ENCODE measurements at regions of chr5 and their contacts with region 1.

Region 1: GRCh38 chr5:136517755-136518154 is 152.4 kb upstream of the TRPC7 start:
- DNase-seq: no peak
- ATAC-seq: no peak
- H3K4me3 ChIP-seq: no peak overlapping the region
- H3K27ac ChIP-seq: no peak overlapping the region
- H3K4me1 ChIP-seq: no peaks in the 10 kb centered on the region; the same call in 1 of the 2 replicates
- H3K27me3 ChIP-seq: peaks cover 4% of the 10 kb centered on the region; the same call in 1 of the 2 replicates
- CTCF ChIP-seq: no peak

Region 2: DNA sequence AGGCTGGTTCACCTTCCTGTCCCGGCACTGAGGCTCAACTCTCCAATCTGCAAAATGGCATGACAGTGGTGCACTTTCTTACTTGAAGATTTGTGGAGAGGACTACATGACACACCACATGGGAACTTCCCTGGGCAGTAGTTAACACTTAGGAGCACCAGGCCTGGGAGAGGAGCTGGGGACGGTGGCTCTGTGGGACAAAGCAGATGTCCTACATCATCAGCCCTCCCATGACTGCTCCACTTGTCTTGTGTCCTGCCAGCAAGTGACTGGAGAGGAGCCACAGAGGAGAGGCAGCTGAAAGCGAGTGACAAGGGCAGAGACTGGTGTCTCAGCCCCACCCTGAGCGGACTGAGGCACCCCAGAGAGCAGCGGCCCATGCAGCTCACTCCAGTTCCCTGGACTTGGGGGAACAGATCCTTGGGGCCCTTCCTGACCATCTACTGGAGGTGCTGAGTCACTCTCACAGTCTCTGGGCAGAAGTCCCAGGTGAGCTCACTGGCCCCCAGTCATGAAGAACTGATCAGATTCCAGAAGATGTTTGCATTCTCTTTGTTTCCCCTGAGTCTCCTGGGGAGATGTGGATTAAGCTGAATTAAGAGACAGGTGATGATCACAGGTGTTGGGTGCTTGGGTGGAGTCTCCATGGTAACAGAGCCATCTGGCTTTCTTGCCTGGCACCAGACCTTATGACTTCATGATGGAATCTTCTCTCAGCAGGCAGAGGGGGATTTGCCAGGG is 696.5 kb before region 1 on chr5:
- CTCF ChIA-PET with region 1: no interaction called
- POLR2A ChIA-PET with region 1: interaction called, 12 read pairs
- in situ Hi-C with region 1: no loop called
- intact Hi-C with region 1: no loop called
- DNase-seq: no peak
- ATAC-seq: no peak
- H3K4me3 ChIP-seq: no peak overlapping the region
- H3K27ac ChIP-seq: no peak overlapping the region
- H3K4me1 ChIP-seq: no peaks in the 10 kb centered on the region
- H3K27me3 ChIP-seq: peaks cover 7% of the 10 kb centered on the region; the same call in 1 of the 2 replicates
- CTCF ChIP-seq: no peak

Region 3: DNA sequence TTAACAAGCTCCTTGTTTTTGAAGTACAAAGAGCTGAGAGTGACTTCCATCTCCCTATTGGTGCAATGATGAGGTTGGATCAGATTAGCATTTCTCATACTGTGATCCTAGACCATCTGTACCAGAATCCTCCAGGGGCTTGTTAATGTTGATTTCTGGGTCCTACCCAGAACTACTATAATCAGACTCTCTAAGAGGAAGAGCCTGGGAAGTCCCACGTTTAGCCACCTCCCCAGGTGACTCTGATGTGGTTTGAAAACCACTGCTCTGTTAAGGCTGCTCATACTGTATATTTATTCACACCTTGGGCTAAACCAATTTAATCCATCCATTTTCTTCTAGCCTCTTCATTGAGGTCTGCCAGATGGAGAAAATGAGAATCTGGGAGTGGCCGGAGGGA is 275.1 kb before region 1 on chr5:
- CTCF ChIA-PET with region 1: interaction called, 10 read pairs
- POLR2A ChIA-PET with region 1: no interaction called
- in situ Hi-C with region 1: no loop called
- intact Hi-C with region 1: no loop called
- DNase-seq: no peak
- ATAC-seq: no peak
- H3K4me3 ChIP-seq: no peak overlapping the region
- H3K27ac ChIP-seq: no peak overlapping the region
- H3K4me1 ChIP-seq: no peaks in the 10 kb centered on the region
- H3K27me3 ChIP-seq: 0 out of 2 replicates have a peak, but pooled peaks cover 2% of the 10 kb centered on the region
- CTCF ChIP-seq: no peak